ENCODE measurements at regions of chr2 and their contacts with region 1.

Region 1: DNA sequence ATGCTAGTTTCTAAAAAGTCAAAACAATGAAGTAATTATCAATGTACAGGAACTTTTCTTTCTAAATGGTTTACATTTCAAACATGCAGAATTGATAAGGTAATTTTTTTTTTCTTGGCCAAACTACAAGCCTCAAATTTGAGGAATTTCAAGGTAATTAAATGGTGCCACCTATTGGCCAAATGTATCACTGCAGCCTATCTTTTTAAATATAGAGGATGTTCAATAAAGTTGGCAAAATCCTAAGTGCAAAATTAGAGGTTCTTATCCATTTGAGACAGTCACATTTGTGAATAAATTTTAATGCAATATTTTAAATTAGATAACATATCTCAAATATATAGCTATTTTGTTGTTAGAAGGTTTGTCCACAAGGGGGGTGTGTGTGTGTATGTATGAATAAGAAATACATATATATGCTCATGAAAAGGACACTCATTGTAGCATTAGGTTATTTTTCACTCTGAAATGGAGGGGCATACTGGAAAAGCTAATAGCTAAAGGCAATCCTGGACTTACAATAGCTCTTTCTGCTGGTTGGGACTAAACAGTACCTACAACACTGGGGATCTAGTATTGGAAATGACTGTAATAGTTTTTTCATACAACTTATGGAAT is 26.2 kb downstream of the MMADHC start:
- DNase-seq: no peak

Region 2: GRCh38 chr2:147937744-147938349 is 1623.6 kb before region 1 on chr2:
- intact Hi-C with region 1: loop called (anchors 10 kb)
- DNase-seq: no peak

Region 3: GRCh38 chr2:149017116-149017985 is 544.1 kb before region 1 on chr2:
- intact Hi-C with region 1: loop called (anchors 1 kb)
- DNase-seq: peak; percentile 55 to 96 (median 86)

Region 4: GRCh38 chr2:149033716-149034115 is 527.7 kb before region 1 on chr2:
- intact Hi-C with region 1: loop called (anchors 5 kb)
- DNase-seq: no peak

Region 5: DNA sequence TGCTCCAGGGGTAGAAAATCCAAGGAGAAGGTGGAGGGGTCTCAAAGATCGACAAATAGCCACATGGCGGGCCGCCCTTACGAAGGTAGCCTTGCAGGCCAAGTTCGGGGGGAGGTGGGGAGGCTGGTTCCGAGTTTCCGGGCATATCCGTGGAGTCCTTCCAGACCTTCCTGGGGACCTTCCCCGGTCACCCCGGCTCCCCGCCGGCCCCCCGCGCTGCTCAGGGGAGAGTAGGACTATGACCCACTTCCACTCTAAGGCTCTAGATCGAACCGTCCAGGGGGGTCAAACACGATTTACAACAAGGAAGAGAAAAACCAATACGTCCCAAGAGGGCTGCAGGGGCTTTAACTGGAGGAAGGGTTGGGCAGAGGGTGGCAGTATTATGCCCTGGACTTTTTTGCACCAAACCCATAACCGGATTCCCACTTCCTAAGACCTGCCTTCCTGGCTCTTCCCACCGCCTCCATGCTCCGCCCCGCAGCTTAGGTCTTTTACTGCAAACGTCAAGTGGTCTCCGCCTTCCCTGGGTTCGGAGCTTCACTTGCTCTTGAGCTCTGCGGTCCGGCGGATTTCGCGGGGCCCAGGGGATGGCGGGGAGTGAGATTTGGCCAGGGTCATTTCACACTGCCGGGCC is 231.8 kb before region 1 on chr2:
- intact Hi-C with region 1: loop called (anchors 10 kb)
- DNase-seq: peak in 8 of 10 donors; percentile 22 to 85 (median 32)

Region 6: GRCh38 chr2:149650006-149650405 is 88.6 kb after region 1 on chr2:
- intact Hi-C with region 1: no loop called
- DNase-seq: no peak

Region 7: GRCh38 chr2:149994057-149994753 is 432.8 kb after region 1 on chr2:
- intact Hi-C with region 1: no loop called
- DNase-seq: no peak